ENCODE measurements at regions of chr20 and their contacts with region 1.

Region 1: DNA sequence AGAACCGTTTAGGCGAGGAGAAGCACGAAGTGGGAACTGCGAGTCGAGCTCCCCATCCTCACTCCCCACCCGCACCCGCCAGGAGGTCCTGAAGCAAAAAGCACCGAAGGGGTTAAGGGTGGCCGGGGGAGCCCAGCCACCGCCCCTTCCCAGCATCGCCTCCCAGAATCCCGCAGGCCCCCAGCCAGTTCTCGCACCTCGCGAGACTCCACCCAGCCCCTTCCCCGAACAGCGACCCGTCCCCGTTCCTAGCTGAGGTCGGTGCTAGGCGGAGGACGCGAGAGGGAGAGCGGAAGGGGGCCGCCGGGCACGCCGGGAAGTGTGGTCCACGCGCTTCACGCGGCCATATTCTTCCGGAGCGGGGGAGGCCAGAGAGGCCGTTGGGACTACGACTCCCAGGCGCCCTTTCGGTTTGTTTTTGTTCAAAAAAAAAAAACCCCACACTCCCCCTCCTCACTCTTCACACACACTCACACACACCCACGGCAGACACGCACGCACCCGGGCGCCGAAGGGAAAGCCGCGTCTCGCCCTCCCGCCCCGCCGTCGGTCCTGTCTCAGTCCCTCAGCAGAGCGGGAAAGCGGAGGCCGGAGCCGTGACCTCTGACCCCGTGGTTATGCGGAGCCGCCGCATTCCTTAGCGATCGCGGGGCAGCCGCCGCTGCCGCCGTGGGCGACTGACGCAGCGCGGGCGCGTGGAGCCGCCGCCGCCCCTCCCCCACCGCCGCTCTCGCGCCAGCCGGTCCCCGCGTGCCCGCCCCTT is at the start of gene ASXL1:
- DNase-seq: peak; percentile 81 to 96 (median 95)
- ATAC-seq: peak; percentile 94
- H3K4me3 ChIP-seq: peak within 1 kb of the TSS; percentile 95
- H3K4me3 Mint-ChIP-seq: peak within 1 kb of the TSS; percentile 87 to 99 (median 96)
- H3K27ac ChIP-seq: peak within 1 kb of the TSS; percentile 98
- H3K27ac Mint-ChIP-seq: peak within 1 kb of the TSS; percentile 97 to 100 (median 99)
- H3K4me1 ChIP-seq: peaks cover 10 to 27% of the 10 kb centered on the region in 2 donors
- H3K4me1 Mint-ChIP-seq: peaks cover 38 to 65% (median 45%) of the 10 kb centered on the region in 7 donors
- H3K27me3 ChIP-seq: no peaks in the 10 kb centered on the region
- H3K27me3 Mint-ChIP-seq: no peaks in the 10 kb centered on the region
- total RNA-seq, gene ASXL1: 106 to 200 (median 158) TPM

Region 2: DNA sequence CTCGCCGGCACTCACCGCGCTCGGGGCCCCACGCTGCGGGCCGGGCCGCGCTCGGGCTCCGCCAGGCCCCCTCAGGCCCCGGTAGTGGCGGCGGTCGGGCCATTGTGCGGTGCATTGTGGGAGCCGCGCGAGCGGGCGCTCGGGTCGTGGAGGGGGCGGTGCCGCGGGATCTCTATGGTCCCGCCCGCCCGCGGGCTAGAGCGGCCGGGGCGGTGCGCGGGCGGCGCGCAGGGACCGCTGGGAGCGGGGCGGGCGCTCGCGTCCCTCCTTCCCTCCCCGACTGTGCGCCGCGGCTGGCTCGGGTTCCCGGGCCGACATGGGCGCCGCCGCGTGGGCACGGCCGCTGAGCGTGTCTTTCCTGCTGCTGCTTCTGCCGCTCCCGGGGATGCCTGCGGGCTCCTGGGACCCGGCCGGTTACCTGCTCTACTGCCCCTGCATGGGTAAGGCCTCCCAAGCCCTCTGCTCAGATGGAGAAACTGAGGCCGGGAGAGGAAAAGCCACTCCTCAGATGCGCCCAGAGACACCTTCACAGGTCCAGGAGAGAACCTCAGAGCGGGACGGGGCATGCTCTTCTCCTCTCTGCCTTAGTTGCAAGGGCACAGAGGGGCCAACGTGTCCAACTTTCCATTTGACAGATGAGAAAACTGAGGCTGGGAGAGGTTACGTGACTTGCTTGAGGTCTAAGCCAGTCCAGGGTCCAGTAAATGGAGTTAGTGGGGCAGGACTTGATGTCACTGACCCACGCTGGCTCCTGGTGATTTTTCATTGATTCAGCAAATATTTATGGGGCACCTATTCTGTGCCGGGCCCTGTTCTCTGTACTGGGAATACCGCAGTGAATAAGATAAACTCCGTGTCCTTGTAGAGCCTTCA is 150.2 kb before region 1 on chr20 and contains the starts of genes PLAGL2 and POFUT1:
- CTCF ChIA-PET with region 1: no interaction called
- POLR2A ChIA-PET with region 1: interaction called, 5 read pairs
- intact Hi-C with region 1: loop called (anchors 1 kb)
- DNase-seq: peak; percentile 82 to 96 (median 88)
- ATAC-seq: peak; percentile 99
- H3K4me3 ChIP-seq: peak within 1 kb of the TSS; percentile 94
- H3K4me3 Mint-ChIP-seq: peak within 1 kb of the TSS; percentile 90 to 100 (median 96)
- H3K27ac ChIP-seq: peak within 1 kb of the TSS; percentile 91
- H3K27ac Mint-ChIP-seq: peak within 1 kb of the TSS; percentile 89 to 95 (median 92)
- H3K4me1 ChIP-seq: peaks cover 23 to 35% of the 10 kb centered on the region in 2 donors
- H3K4me1 Mint-ChIP-seq: peaks cover 66 to 83% (median 77%) of the 10 kb centered on the region in 7 donors
- H3K27me3 ChIP-seq: no peaks in the 10 kb centered on the region
- H3K27me3 Mint-ChIP-seq: no peaks in the 10 kb centered on the region
- total RNA-seq, gene PLAGL2: 15.6 to 30.1 (median 17.6) TPM
- total RNA-seq, gene POFUT1: 12.5 to 32.2 (median 19.7) TPM

Region 3: DNA sequence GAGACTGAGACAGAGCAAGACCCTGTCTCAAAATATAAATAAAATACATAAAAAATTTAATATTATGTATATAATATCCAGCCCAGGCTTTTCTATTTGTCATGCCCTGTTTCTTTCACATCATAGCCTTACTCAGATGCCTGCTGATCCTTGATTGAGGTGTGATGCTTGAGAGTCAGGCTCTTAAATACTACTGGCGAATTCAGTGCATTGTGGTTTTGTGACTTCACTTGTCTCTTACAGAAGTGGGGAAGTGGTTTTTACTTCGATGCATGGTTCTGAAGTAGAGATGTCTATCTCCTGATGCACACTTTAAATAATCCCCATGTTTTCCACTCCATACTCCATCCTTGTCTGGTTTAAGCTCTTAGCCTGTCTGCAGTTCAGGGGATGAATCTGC is 29.2 kb after region 1 on chr20:
- CTCF ChIA-PET with region 1: no interaction called
- POLR2A ChIA-PET with region 1: interaction called, 13 read pairs
- intact Hi-C with region 1: loop called (anchors 1 kb)
- DNase-seq: peak in 7 of 9 donors; percentile 65 to 86 (median 81)
- ATAC-seq: peak; percentile 96
- H3K4me3 ChIP-seq: no peak overlapping the region
- H3K4me3 Mint-ChIP-seq: peak overlapping the region; percentile 2 to 72 (median 48)
- H3K27ac ChIP-seq: peak overlapping the region; percentile 57
- H3K27ac Mint-ChIP-seq: peak overlapping the region; percentile 6 to 92 (median 63)
- H3K4me1 ChIP-seq: peaks cover 23 to 30% of the 10 kb centered on the region in 2 donors
- H3K4me1 Mint-ChIP-seq: peaks cover 47 to 87% (median 75%) of the 10 kb centered on the region in 7 donors
- H3K27me3 ChIP-seq: no peaks in the 10 kb centered on the region
- H3K27me3 Mint-ChIP-seq: no peaks in the 10 kb centered on the region

Region 4: GRCh38 chr20:32493356-32493755 is 135.3 kb after region 1 on chr20:
- CTCF ChIA-PET with region 1: no interaction called
- POLR2A ChIA-PET with region 1: no interaction called
- intact Hi-C with region 1: no loop called
- DNase-seq: no peak
- ATAC-seq: no peak
- H3K4me3 ChIP-seq: no peak overlapping the region
- H3K4me3 Mint-ChIP-seq: peak overlapping the region in 1 of 10 donors; percentile 25
- H3K27ac ChIP-seq: no peak overlapping the region
- H3K27ac Mint-ChIP-seq: peak overlapping the region in 6 of 9 donors; percentile 13 to 81 (median 64)
- H3K4me1 ChIP-seq: peaks cover 0 to 6% of the 10 kb centered on the region in 2 donors
- H3K4me1 Mint-ChIP-seq: peaks cover 8 to 73% (median 43%) of the 10 kb centered on the region in 7 donors
- H3K27me3 ChIP-seq: no peaks in the 10 kb centered on the region
- H3K27me3 Mint-ChIP-seq: no peaks in the 10 kb centered on the region

Region 5: GRCh38 chr20:32509639-32510066 is 151.6 kb after region 1 on chr20:
- CTCF ChIA-PET with region 1: no interaction called
- POLR2A ChIA-PET with region 1: interaction called, 4 read pairs
- intact Hi-C with region 1: loop called in 1 of 2 experiments (anchors 1 kb)
- DNase-seq: peak in 7 of 9 donors; percentile 70 to 86 (median 81)
- ATAC-seq: peak; percentile 86
- H3K4me3 ChIP-seq: peak overlapping the region; percentile 54
- H3K4me3 Mint-ChIP-seq: peak overlapping the region; percentile 56 to 95 (median 90)
- H3K27ac ChIP-seq: peak overlapping the region; percentile 84
- H3K27ac Mint-ChIP-seq: peak overlapping the region; percentile 80 to 98 (median 97)
- H3K4me1 ChIP-seq: peaks cover 42 to 71% of the 10 kb centered on the region in 2 donors
- H3K4me1 Mint-ChIP-seq: peaks cover 54 to 90% (median 79%) of the 10 kb centered on the region in 7 donors
- H3K27me3 ChIP-seq: no peaks in the 10 kb centered on the region
- H3K27me3 Mint-ChIP-seq: no peaks in the 10 kb centered on the region

Region 6: GRCh38 chr20:32819992-32820710 is 462.1 kb after region 1 on chr20:
- CTCF ChIA-PET with region 1: no interaction called
- POLR2A ChIA-PET with region 1: no interaction called
- intact Hi-C with region 1: loop called in 1 of 2 experiments (anchors 1 kb)
- DNase-seq: peak in 7 of 9 donors; percentile 81 to 96 (median 93)
- ATAC-seq: peak; percentile 85
- H3K4me3 ChIP-seq: peak overlapping the region; percentile 93
- H3K4me3 Mint-ChIP-seq: peak overlapping the region; percentile 89 to 99 (median 94)
- H3K27ac ChIP-seq: peak overlapping the region; percentile 85
- H3K27ac Mint-ChIP-seq: peak overlapping the region; percentile 66 to 99 (median 98)
- H3K4me1 ChIP-seq: peaks cover 22 to 34% of the 10 kb centered on the region in 2 donors
- H3K4me1 Mint-ChIP-seq: peaks cover 28 to 49% (median 44%) of the 10 kb centered on the region in 7 donors
- H3K27me3 ChIP-seq: no peaks in the 10 kb centered on the region
- H3K27me3 Mint-ChIP-seq: no peaks in the 10 kb centered on the region

Region 7: DNA sequence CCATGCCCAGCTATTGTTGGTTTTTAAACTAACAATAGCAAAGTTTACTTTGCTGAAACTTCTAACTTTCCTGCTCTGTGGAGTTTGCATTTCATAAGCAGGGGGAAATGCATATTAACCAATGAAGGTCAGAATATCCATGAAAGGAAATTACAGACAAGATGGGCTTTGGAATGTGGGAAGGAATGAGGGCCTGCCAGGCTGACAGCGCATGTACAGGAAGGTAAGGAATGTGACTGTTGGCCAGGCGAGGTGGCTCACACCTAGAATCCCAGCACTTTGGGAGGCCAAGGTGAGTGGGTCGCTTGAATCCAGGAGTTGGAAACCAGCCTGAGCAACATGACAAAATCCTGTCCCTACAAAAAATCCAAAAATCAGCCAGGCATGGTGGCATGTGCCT is 993.6 kb after region 1 on chr20:
- CTCF ChIA-PET with region 1: no interaction called
- POLR2A ChIA-PET with region 1: no interaction called
- intact Hi-C with region 1: no loop called
- DNase-seq: no peak
- ATAC-seq: no peak
- H3K4me3 ChIP-seq: no peak overlapping the region
- H3K4me3 Mint-ChIP-seq: no peak overlapping the region
- H3K27ac ChIP-seq: no peak overlapping the region
- H3K27ac Mint-ChIP-seq: peak overlapping the region in 1 of 9 donors; percentile 75
- H3K4me1 ChIP-seq: no peaks in the 10 kb centered on the region
- H3K4me1 Mint-ChIP-seq: peaks cover 0 to 4% (median 0%) of the 10 kb centered on the region in 7 donors
- H3K27me3 ChIP-seq: no peaks in the 10 kb centered on the region
- H3K27me3 Mint-ChIP-seq: no peaks in the 10 kb centered on the region